ENCODE measurements at regions of chr1 and their contacts with region 1.

Region 1: DNA sequence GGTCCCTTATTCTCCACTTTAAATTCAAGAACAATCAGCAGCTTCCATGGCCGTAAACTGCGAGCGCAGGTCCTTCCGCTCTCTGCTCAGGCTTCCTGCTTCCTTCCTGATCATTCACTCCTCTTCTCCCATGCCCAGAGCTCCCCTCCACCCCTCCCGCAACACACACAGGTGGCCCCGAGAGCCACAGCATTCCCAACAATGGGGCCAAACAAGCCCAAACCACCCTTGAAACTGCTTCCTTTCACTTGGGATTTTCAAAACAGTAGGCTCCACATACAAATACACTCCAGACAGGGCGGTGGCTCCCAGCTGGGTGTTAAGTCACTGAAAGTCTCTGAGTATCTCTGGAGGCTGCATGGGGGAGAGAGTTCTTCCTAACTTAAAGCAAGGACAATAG is 11.4 kb downstream of the FAM89A start:
- DNase-seq: peak; percentile 89
- H3K4me3 ChIP-seq: no peak overlapping the region
- H3K27ac ChIP-seq: peak overlapping the region; percentile 45
- H3K4me1 ChIP-seq: peaks cover 16% of the 10 kb centered on the region
- H3K27me3 ChIP-seq: no peaks in the 10 kb centered on the region
- CTCF ChIP-seq: no peak
- POLR2A ChIP-seq: no peak

Region 2: GRCh38 chr1:230222678-230223077 is 806.0 kb before region 1 on chr1:
- CTCF ChIA-PET with region 1: no interaction called
- POLR2A ChIA-PET with region 1: no interaction called
- dilution Hi-C with region 1: no loop called
- intact Hi-C with region 1: no loop called
- DNase-seq: no peak
- H3K4me3 ChIP-seq: no peak overlapping the region
- H3K27ac ChIP-seq: no peak overlapping the region
- H3K4me1 ChIP-seq: no peaks in the 10 kb centered on the region
- H3K27me3 ChIP-seq: no peaks in the 10 kb centered on the region
- CTCF ChIP-seq: no peak
- POLR2A ChIP-seq: no peak

Region 3: GRCh38 chr1:230867903-230868735 is 160.6 kb before region 1 on chr1 and contains the start of gene C1orf198:
- CTCF ChIA-PET with region 1: no interaction called
- POLR2A ChIA-PET with region 1: no interaction called
- dilution Hi-C with region 1: no loop called
- intact Hi-C with region 1: loop called (anchors 2 kb)
- DNase-seq: peak; percentile 60
- H3K4me3 ChIP-seq: peak within 1 kb of the TSS; percentile 70 to 93 (median 83)
- H3K27ac ChIP-seq: peak within 1 kb of the TSS; percentile 33
- H3K4me1 ChIP-seq: peaks cover 20% of the 10 kb centered on the region
- H3K27me3 ChIP-seq: no peaks in the 10 kb centered on the region
- CTCF ChIP-seq: no peak
- POLR2A ChIP-seq: peak; percentile 65
- total RNA-seq, gene C1orf198: 27.7 and 29.2 TPM in 2 replicates

Region 4: GRCh38 chr1:231040019-231040799 is 11.5 kb after region 1 on chr1 and contains the start of gene FAM89A:
- CTCF ChIA-PET with region 1: interaction called, 4 read pairs
- POLR2A ChIA-PET with region 1: no interaction called
- dilution Hi-C with region 1: no loop called
- intact Hi-C with region 1: loop called (anchors 1 kb)
- DNase-seq: no peak
- H3K4me3 ChIP-seq: peak within 1 kb of the TSS; percentile 64 to 84 (median 65)
- H3K27ac ChIP-seq: no peak within 1 kb of the TSS
- H3K4me1 ChIP-seq: peaks cover 16% of the 10 kb centered on the region
- H3K27me3 ChIP-seq: peaks cover 11 to 28% of the 10 kb centered on the region in 2 experiments
- CTCF ChIP-seq: no peak
- POLR2A ChIP-seq: no peak
- total RNA-seq, gene FAM89A: 13.6 and 24.0 TPM in 2 replicates

Region 5: DNA sequence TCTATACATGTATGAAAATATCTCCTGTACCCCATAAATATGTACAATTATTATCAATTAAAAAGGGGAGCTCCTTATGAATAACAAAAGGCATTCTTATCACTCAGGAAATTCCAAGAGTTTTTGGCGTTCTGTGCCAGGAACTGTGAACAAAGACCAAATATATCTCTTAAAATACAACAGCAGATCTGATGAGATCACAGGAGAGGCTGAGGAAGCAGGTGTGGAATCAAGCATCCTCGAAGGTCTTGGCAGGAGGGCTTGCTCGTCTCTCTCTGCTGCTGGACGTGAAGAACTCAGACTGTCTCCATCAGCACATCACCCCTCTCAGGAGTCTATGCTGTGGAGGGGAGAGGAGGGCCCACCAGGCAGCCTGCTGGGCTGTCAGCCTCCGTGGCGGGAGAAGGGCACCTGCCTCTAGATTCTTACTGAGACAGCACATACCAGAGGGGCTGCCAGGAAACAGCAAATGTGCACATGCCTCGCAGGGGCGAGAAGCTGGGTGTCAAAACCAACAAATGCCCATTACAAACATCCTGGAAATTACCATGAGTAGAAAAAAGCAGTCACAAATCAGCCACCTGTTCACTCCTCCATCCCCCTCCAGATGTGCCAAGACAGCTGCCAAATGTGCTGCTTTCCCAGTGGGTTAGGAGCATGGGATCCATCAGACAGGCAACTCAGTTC is 42.2 kb after region 1 on chr1:
- CTCF ChIA-PET with region 1: no interaction called
- POLR2A ChIA-PET with region 1: interaction called, 4 read pairs
- dilution Hi-C with region 1: no loop called
- intact Hi-C with region 1: loop called (anchors 1 kb)
- DNase-seq: peak; percentile 71
- H3K4me3 ChIP-seq: no peak overlapping the region
- H3K27ac ChIP-seq: peak overlapping the region; percentile 22
- H3K4me1 ChIP-seq: peaks cover 13% of the 10 kb centered on the region
- H3K27me3 ChIP-seq: peaks cover 0 to 4% of the 10 kb centered on the region in 2 experiments
- CTCF ChIP-seq: no peak
- POLR2A ChIP-seq: no peak

Region 6: GRCh38 chr1:231162297-231162969 is 133.8 kb after region 1 on chr1:
- CTCF ChIA-PET with region 1: no interaction called
- POLR2A ChIA-PET with region 1: no interaction called
- dilution Hi-C with region 1: no loop called
- intact Hi-C with region 1: loop called (anchors 5 kb)
- DNase-seq: peak; percentile 34
- H3K4me3 ChIP-seq: peak overlapping the region in 1 of 3 experiments; percentile 19
- H3K27ac ChIP-seq: no peak overlapping the region
- H3K4me1 ChIP-seq: no peaks in the 10 kb centered on the region
- H3K27me3 ChIP-seq: peaks cover 57 to 72% of the 10 kb centered on the region in 2 experiments
- CTCF ChIP-seq: no peak
- POLR2A ChIP-seq: no peak